Activated CD4-positive, alpha-beta memory T cell treated with anti-CD3 and anti-CD28 coated beads, Interleukin-2, amount 10 ng/mL, durations not matched to agents 7 days and 5 days (primary cell): ENCODE measurements at regions of chr9 and their contacts with region 1.

Region 1: DNA sequence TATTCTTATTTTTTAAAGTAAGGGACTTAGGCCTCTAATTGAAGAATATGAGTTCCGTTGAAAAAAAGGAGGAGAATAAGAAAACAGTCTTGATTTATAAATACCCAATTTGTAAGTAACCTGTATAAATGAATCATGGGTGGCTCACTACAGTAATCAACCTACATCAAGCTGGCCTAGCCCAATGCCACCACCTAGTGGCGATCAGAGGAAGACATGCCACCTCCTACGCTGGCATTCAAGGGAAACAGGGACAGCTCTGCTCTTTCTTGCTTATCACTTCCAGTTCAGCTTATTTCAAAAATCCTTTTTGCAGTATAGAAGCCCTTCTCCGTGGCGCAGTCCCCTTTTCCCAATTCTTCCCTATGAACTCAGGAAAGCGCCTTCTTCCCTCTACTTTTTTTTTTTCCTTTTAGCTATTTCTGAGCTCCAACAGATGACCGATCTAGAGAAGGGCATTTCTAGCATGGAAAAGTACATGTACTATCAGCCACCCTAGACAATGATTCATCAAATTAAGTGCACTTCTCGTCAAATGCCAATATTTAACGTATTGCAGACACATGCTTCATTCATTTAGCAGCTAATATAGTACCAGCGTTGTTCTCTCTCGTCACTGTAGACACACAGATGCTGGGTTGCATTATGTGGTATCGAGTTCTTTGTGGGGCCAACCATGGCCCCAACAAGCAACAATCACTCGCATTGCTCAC is 28.3 kb downstream of the PTPN3 start:
- DNase-seq: peak; percentile 77
- H3K4me3 Mint-ChIP-seq: no peak overlapping the region
- H3K27ac Mint-ChIP-seq: no peak overlapping the region
- H3K4me1 Mint-ChIP-seq: peaks cover 40% of the 10 kb centered on the region
- H3K27me3 Mint-ChIP-seq: peaks cover 24% of the 10 kb centered on the region

Region 2: GRCh38 chr9:109244157-109245132 is 225.4 kb before region 1 on chr9:
- CTCF ChIA-PET with region 1: interaction called, 12 read pairs
- POLR2A ChIA-PET with region 1: no interaction called
- DNase-seq: peak; percentile 67
- H3K4me3 Mint-ChIP-seq: no peak overlapping the region
- H3K27ac Mint-ChIP-seq: no peak overlapping the region
- H3K4me1 Mint-ChIP-seq: no peaks in the 10 kb centered on the region
- H3K27me3 Mint-ChIP-seq: peaks cover 11% of the 10 kb centered on the region

Region 3: GRCh38 chr9:109411798-109412352 is 57.9 kb before region 1 on chr9:
- CTCF ChIA-PET with region 1: interaction called, 18 read pairs
- POLR2A ChIA-PET with region 1: no interaction called
- DNase-seq: peak; percentile 32
- H3K4me3 Mint-ChIP-seq: no peak overlapping the region
- H3K27ac Mint-ChIP-seq: peak overlapping the region; percentile 38
- H3K4me1 Mint-ChIP-seq: peaks cover 30% of the 10 kb centered on the region
- H3K27me3 Mint-ChIP-seq: peaks cover 5% of the 10 kb centered on the region

Region 4: GRCh38 chr9:109440797-109441287 is 29.0 kb before region 1 on chr9:
- CTCF ChIA-PET with region 1: interaction called, 206 read pairs
- POLR2A ChIA-PET with region 1: interaction called, 13 read pairs
- DNase-seq: peak; percentile 68
- H3K4me3 Mint-ChIP-seq: no peak overlapping the region
- H3K27ac Mint-ChIP-seq: peak overlapping the region; percentile 51
- H3K4me1 Mint-ChIP-seq: peaks cover 22% of the 10 kb centered on the region
- H3K27me3 Mint-ChIP-seq: peaks cover 42% of the 10 kb centered on the region

Region 5: GRCh38 chr9:109451311-109452025 is 18.3 kb before region 1 on chr9:
- CTCF ChIA-PET with region 1: interaction called, 60 read pairs
- POLR2A ChIA-PET with region 1: interaction called, 10 read pairs
- DNase-seq: no peak
- H3K4me3 Mint-ChIP-seq: no peak overlapping the region
- H3K27ac Mint-ChIP-seq: no peak overlapping the region
- H3K4me1 Mint-ChIP-seq: peaks cover 30% of the 10 kb centered on the region
- H3K27me3 Mint-ChIP-seq: peaks cover 27% of the 10 kb centered on the region

Region 6: DNA sequence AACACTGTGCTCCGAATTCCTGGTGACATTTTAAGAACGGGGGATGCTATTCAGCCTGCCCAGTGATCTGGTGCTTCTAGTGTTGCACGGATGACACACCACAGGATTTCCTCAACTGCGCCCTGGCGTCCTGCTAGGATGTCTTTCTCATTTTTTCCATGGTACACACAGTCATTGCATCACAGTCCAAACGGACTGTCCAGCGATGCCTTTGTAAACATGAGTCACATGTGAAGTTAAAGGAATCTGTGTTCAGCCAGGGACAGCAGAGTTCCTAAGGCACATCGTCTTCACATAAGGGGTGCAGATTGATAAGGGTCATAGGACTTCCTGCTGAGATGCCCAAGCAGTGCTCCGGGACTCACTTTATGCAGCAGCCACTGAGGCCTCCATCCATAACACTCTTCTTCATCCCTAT is 37.6 kb after region 1 on chr9:
- CTCF ChIA-PET with region 1: no interaction called
- POLR2A ChIA-PET with region 1: no interaction called
- DNase-seq: no peak
- H3K4me3 Mint-ChIP-seq: no peak overlapping the region
- H3K27ac Mint-ChIP-seq: no peak overlapping the region
- H3K4me1 Mint-ChIP-seq: peaks cover 4% of the 10 kb centered on the region
- H3K27me3 Mint-ChIP-seq: peaks cover 17% of the 10 kb centered on the region

Region 7: GRCh38 chr9:109538337-109538736 is 68.5 kb after region 1 on chr9:
- CTCF ChIA-PET with region 1: no interaction called
- POLR2A ChIA-PET with region 1: no interaction called
- DNase-seq: no peak
- H3K4me3 Mint-ChIP-seq: no peak overlapping the region
- H3K27ac Mint-ChIP-seq: no peak overlapping the region
- H3K4me1 Mint-ChIP-seq: no peaks in the 10 kb centered on the region
- H3K27me3 Mint-ChIP-seq: peaks cover 8% of the 10 kb centered on the region

Region 8: GRCh38 chr9:109600144-109600543 is 130.3 kb after region 1 on chr9:
- CTCF ChIA-PET with region 1: no interaction called
- POLR2A ChIA-PET with region 1: no interaction called
- DNase-seq: no peak
- H3K4me3 Mint-ChIP-seq: no peak overlapping the region
- H3K27ac Mint-ChIP-seq: no peak overlapping the region
- H3K4me1 Mint-ChIP-seq: no peaks in the 10 kb centered on the region
- H3K27me3 Mint-ChIP-seq: no peaks in the 10 kb centered on the region